ENCODE measurements at regions of chr3 and their contacts with region 1.

Region 1: DNA sequence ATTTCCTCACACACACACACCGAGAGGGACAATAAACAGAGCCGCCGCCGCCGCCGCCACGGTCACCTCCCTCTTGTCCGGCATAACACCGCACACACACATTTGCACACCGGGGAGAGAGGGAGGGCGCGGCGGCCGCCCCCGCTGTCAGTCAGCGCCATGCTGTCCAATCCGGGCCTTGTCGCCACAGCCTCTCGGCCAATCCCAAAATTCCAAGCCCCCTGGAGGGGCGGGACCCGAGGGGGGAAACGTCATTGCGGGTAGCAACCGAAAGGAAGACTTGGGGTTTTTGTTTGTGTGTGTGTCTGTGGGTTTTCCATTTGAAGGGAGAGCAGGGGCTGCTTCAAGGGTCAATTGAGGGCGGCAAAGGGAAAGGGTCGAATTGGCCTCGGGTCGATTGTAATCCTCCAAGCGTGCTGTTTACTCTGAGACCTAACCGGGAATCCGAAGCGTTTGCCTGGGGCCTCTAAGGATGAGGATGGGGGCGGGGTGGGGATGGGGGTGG is at the start of gene TOP2B:
- DNase-seq: peak; percentile 75
- H3K4me3 ChIP-seq: peak within 1 kb of the TSS; percentile 81 to 95 (median 90)
- H3K27ac ChIP-seq: peak within 1 kb of the TSS; percentile 98 to 99 (median 99)
- H3K4me1 ChIP-seq: peaks cover 14 to 47% (median 18%) of the 10 kb centered on the region in 3 donors
- H3K27me3 ChIP-seq: no peaks in the 10 kb centered on the region
- CTCF ChIP-seq: peak in 1 of 6 experiments; percentile 7
- POLR2A ChIP-seq: peak in 3 of 4 donors; percentile 84 to 95 (median 94)
- total RNA-seq, gene TOP2B: 47.6 to 89.8 (median 67.4) TPM

Region 2: GRCh38 chr3:25782938-25783660 is 118.2 kb after region 1 on chr3 and contains the start of gene NGLY1:
- intact Hi-C with region 1: loop called (anchors 5 kb)
- DNase-seq: peak; percentile 52
- H3K4me3 ChIP-seq: peak within 1 kb of the TSS; percentile 89 to 98 (median 93)
- H3K27ac ChIP-seq: peak within 1 kb of the TSS; percentile 90 to 95 (median 92)
- H3K4me1 ChIP-seq: peaks cover 0 to 27% (median 8%) of the 10 kb centered on the region in 3 donors
- H3K27me3 ChIP-seq: no peaks in the 10 kb centered on the region
- CTCF ChIP-seq: peak in 4 of 6 experiments; percentile 19 to 42 (median 35)
- POLR2A ChIP-seq: peak in 3 of 4 donors; percentile 72 to 94 (median 86)
- total RNA-seq, gene NGLY1: 21.3 to 33.8 (median 30.1) TPM